ENCODE measurements at regions of chr2 and their contacts with region 1.

Region 1: GRCh38 chr2:206800506-206801417 is 35.4 kb downstream of the FASTKD2 start:
- DNase-seq: peak; percentile 21 to 75
- ATAC-seq: peak; percentile 51 to 86 (median 82)
- H3K4me3 ChIP-seq: peak overlapping the region in 4 of 10 donors; percentile 6 to 22 (median 17)
- H3K27ac ChIP-seq: no peak overlapping the region
- H3K4me1 ChIP-seq: peaks cover 0 to 32% (median 12%) of the 10 kb centered on the region in 9 donors
- H3K27me3 ChIP-seq: no peaks in the 10 kb centered on the region
- CTCF ChIP-seq: peak; percentile 50 to 82 (median 75)

Region 2: GRCh38 chr2:206274434-206275268 is 526.1 kb before region 1 on chr2 and contains the start of gene ZDBF2:
- intact Hi-C with region 1: no loop called
- DNase-seq: peak; percentile 14 to 60
- ATAC-seq: peak; percentile 77 to 94 (median 82)
- H3K4me3 ChIP-seq: peak within 1 kb of the TSS; percentile 63 to 76 (median 70)
- H3K27ac ChIP-seq: peak within 1 kb of the TSS in 9 of 10 donors; percentile 55 to 81 (median 75)
- H3K4me1 ChIP-seq: peaks cover 0 to 17% (median 5%) of the 10 kb centered on the region in 9 donors
- H3K27me3 ChIP-seq: peaks cover 0 to 99% (median 88%) of the 10 kb centered on the region in 7 donors
- CTCF ChIP-seq: no peak
- total RNA-seq, gene ZDBF2: 7.0 to 15.6 (median 10.9) TPM

Region 3: DNA sequence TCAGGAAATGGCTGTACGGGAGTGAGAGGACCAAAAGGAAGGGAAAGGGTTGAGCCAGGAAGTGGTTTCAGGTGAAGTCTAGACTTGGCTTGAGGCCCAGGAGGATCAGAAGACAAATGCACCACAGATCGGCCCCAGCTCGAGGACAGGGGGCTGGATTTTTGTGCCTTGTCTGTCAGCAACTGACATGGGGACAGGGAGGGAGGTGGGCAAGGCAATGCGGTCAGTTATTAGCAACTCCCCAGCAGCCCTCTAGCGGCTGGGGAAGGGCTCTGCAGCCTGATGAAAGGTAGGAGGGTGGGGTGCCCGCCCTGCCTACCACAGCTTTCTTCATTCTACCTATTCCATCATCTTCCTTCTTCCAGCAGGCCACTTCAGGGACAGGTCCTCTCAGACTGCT is 188.5 kb after region 1 on chr2:
- intact Hi-C with region 1: loop called in 8 of 10 experiments (anchors 2 to 10 kb)
- DNase-seq: peak in 1 of 2 donors; percentile 27
- ATAC-seq: peak in 7 of 8 donors; percentile 52 to 88 (median 82)
- H3K4me3 ChIP-seq: no peak overlapping the region
- H3K27ac ChIP-seq: no peak overlapping the region
- H3K4me1 ChIP-seq: peaks cover 0 to 12% (median 0%) of the 10 kb centered on the region in 9 donors
- H3K27me3 ChIP-seq: no peaks in the 10 kb centered on the region
- CTCF ChIP-seq: peak; percentile 38 to 80 (median 74)

Region 4: DNA sequence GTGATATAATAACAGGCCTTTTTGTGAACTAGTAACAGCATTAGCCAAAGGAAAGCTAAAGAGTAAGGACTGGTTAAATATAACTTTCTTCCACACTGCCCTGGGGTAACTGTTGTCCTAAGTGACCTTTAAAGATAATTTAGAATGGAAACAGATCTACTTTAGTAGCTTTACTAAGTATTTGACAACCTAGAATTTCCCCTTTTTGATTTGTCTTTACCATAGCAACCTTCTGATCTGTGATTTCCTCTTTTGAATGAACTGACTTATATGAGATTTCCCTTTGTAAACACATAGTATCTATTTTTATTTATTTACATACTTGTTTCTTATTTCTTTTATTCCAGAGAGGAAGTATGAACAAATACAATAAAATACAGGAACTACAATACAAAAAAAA is 375.5 kb after region 1 on chr2:
- intact Hi-C with region 1: loop called in 1 of 10 experiments (anchors 10 kb)
- DNase-seq: no peak
- ATAC-seq: no peak
- H3K4me3 ChIP-seq: no peak overlapping the region
- H3K27ac ChIP-seq: no peak overlapping the region
- H3K4me1 ChIP-seq: peaks cover 0 to 6% (median 0%) of the 10 kb centered on the region in 9 donors
- H3K27me3 ChIP-seq: no peaks in the 10 kb centered on the region
- CTCF ChIP-seq: no peak

Measured in heart right ventricle (tissue), 16 donors.